BJ (cell line): ENCODE measurements at regions of chr10 and their contacts with region 1.

Region 1: DNA sequence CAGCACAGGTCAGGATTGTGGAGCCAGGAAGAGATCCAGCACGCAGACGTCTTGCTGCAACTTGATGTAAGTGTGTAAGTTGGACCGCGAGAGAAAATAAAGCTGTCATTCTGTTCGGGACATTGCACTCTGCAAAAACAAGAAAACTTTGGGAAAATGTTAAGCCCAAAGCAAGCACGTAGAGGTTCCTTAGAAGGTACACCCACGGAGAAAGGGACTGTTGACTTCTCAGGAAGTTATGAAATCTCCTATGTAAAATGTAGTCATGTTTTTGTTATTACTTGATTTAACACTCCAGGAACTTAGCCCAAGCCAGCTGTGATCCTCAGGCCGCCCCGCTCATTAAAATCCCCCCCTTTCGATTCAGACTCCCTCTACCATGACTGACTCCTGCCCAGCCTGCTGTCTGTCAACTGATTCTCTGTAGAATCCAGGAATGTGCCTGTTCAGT is 196.1 kb upstream of the TCF7L2 start:
- DNase-seq: no peak
- H3K4me3 ChIP-seq: no peak overlapping the region
- H3K27me3 ChIP-seq: no peaks in the 10 kb centered on the region
- CTCF ChIP-seq: no peak

Region 2: GRCh38 chr10:112588225-112588990 is 165.6 kb before region 1 on chr10:
- CTCF ChIA-PET with region 1: no interaction called
- POLR2A ChIA-PET with region 1: interaction called, 13 read pairs
- DNase-seq: no peak
- H3K4me3 ChIP-seq: no peak overlapping the region
- H3K27me3 ChIP-seq: no peaks in the 10 kb centered on the region
- CTCF ChIP-seq: no peak